HepG2 (cell line): ENCODE measurements at regions of chr7 and their contacts with region 1.

Region 1: DNA sequence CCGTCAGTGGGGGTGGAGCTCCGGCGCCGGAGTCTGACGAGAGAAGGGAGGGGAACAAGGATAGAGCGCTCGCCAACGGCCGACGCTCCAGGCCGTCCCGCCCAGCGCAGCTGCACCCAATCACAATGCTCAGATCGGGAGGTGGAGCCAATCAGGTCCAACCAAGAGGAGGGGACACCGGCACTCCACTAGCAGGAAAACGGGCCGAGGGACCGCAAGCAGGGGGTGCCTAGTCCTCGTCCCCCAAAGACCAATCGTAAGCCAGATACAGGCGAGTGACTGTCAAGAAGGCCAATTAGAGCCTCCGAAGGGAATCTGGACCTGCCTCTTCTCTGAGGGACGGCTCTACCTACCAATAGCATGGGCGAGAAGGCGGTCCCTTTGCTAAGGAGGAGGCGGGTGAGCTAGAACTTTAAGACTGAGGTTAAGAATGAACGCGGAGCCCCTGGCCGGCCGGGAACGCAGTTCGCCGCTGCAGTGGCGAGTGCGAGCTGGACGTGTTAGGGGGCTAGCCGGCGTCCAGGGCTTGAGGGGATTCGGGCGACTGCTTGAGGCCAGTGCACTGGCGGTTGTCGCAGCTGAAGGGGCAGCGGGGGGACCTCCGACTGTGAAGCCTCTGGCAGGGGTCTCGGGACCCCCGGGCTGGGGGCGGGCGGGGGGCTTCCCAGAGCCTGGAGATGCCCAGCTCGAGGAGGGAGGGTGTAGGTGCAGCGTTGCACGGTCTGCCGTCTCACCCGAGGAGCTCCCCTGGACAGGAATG is at the start of gene FBXO24:
- DNase-seq: peak; percentile 99
- ATAC-seq: peak; percentile 91
- H3K4me3 ChIP-seq: peak within 1 kb of the TSS; percentile 80 to 98 (median 86)
- H3K27ac ChIP-seq: peak within 1 kb of the TSS; percentile 81
- H3K4me1 ChIP-seq: peaks cover 56% of the 10 kb centered on the region
- H3K27me3 ChIP-seq: peaks cover 0 to 7% of the 10 kb centered on the region in 2 experiments; a peak in 3 of 5 replicates
- CTCF ChIP-seq: no peak
- EP300 ChIP-seq: no peak
- POLR2A ChIP-seq: peak in 1 of 2 experiments; percentile 80; a peak in 2 of 4 replicates
- RAD21 ChIP-seq: no peak
- total RNA-seq, gene FBXO24: 0.13 and 0.20 TPM in 2 replicates

Region 2: GRCh38 chr7:100022665-100023064 is 563.8 kb before region 1 on chr7:
- CTCF ChIA-PET with region 1: no interaction called
- POLR2A ChIA-PET with region 1: no interaction called
- in situ Hi-C with region 1: no loop called
- intact Hi-C with region 1: no loop called
- DNase-seq: peak; percentile 63
- ATAC-seq: peak; percentile 63
- H3K4me3 ChIP-seq: no peak overlapping the region
- H3K27ac ChIP-seq: peak overlapping the region; percentile 28
- H3K4me1 ChIP-seq: peaks cover 78% of the 10 kb centered on the region
- H3K27me3 ChIP-seq: no peaks in the 10 kb centered on the region
- CTCF ChIP-seq: no peak
- EP300 ChIP-seq: peak in 1 of 2 experiments; percentile 27; a peak in 1 of 4 replicates
- POLR2A ChIP-seq: no peak
- RAD21 ChIP-seq: no peak

Region 3: DNA sequence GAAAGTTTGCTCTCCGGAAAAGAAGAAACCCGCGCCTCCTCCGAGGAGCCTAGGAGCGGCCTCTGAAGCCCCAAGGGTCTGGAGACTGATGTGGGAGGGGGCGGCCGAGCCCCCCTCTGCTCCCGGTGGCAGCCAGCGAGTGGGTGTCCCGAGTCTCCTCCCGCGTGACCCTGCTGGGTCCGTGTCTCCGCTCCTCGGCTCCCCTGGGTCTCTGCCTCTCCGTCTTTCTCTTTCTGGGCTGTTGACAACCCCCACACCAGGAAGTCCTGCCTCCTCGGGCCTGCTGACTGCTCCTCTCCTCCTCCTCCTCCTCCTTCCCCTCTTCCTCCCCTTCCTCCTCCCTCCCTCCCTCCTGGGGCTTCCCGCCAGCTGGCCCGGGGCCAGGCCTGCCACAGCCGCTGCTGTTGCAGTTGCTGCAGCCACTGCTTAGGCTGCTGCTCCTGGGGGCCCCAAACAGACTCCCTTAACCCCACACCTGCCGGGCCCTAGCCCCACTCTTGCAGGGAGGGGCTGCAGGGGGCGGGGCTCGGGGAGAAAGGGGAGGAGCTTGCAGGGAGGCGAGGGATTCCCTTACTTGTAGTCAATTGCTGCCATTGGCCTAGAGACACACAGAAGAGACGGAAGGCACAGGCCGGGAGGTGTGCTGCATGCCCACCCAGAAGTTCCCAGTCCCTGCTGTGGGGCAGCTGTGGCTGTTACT is 107.3 kb before region 1 on chr7 and contains the start of gene TSC22D4:
- CTCF ChIA-PET with region 1: no interaction called
- POLR2A ChIA-PET with region 1: interaction called, 18 read pairs
- in situ Hi-C with region 1: no loop called
- intact Hi-C with region 1: no loop called
- DNase-seq: peak; percentile 73
- ATAC-seq: peak; percentile 60
- H3K4me3 ChIP-seq: peak within 1 kb of the TSS; percentile 72 to 96 (median 90)
- H3K27ac ChIP-seq: peak within 1 kb of the TSS; percentile 37
- H3K4me1 ChIP-seq: peaks cover 30% of the 10 kb centered on the region
- H3K27me3 ChIP-seq: peaks cover 0 to 13% of the 10 kb centered on the region in 2 experiments; a peak in 3 of 5 replicates
- CTCF ChIP-seq: no peak
- EP300 ChIP-seq: peak in 1 of 2 experiments; percentile 27; a peak in 1 of 4 replicates
- POLR2A ChIP-seq: peak; percentile 26 to 81; a peak in 3 of 4 replicates
- RAD21 ChIP-seq: no peak; the same call in 1 of the 2 replicates
- total RNA-seq, gene TSC22D4: 6.3 and 7.7 TPM in 2 replicates

Region 4: GRCh38 chr7:100532165-100533022 is 54.1 kb before region 1 on chr7:
- CTCF ChIA-PET with region 1: no interaction called
- POLR2A ChIA-PET with region 1: no interaction called
- in situ Hi-C with region 1: no loop called
- intact Hi-C with region 1: no loop called
- DNase-seq: no peak
- ATAC-seq: no peak
- H3K4me3 ChIP-seq: no peak overlapping the region
- H3K27ac ChIP-seq: no peak overlapping the region
- H3K4me1 ChIP-seq: peaks cover 60% of the 10 kb centered on the region
- H3K27me3 ChIP-seq: no peaks in the 10 kb centered on the region
- CTCF ChIP-seq: no peak
- EP300 ChIP-seq: no peak
- POLR2A ChIP-seq: no peak
- RAD21 ChIP-seq: no peak

Region 5: DNA sequence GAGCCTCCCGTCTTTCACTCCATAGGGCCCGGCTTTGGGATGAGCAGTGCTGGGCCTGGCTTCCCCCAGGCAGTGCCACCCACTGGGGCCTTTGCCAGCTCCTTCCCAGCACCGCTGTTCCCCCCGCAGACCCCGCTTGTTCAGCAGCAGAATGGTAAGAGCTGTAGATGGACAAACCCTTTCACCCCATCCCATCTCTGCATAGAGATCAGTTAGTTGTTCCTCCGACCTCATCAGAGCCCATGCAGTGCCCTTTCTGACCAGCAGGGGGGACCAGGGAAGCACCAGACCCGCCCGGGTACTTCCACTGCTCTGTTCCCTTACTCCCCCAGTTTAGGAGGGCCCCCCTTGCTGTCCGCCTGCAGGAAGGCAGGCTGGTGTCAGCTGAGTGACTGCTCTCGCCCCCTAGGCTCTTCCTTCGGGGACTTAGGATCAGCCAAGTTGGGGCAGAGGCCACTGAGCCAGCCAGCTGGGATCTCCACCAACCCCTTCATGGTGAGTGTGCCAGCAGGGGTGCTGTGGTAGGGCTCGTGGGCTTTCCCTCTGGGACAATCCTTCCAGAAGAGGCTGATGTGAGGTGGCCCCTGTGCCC is 22.5 kb before region 1 on chr7:
- CTCF ChIA-PET with region 1: no interaction called
- POLR2A ChIA-PET with region 1: interaction called, 33 read pairs
- in situ Hi-C with region 1: no loop called
- intact Hi-C with region 1: no loop called
- DNase-seq: no peak
- ATAC-seq: peak; percentile 5; the same call in 1 of the 3 replicates
- H3K4me3 ChIP-seq: no peak overlapping the region
- H3K27ac ChIP-seq: peak overlapping the region; percentile 45
- H3K4me1 ChIP-seq: peaks cover 93% of the 10 kb centered on the region
- H3K27me3 ChIP-seq: no peaks in the 10 kb centered on the region
- CTCF ChIP-seq: peak; percentile 82
- EP300 ChIP-seq: no peak
- POLR2A ChIP-seq: no peak
- RAD21 ChIP-seq: peak; percentile 66

Region 6: GRCh38 chr7:100611974-100612729 is 25.7 kb after region 1 on chr7 and contains the start of gene MOSPD3:
- CTCF ChIA-PET with region 1: no interaction called
- POLR2A ChIA-PET with region 1: interaction called, 61 read pairs
- in situ Hi-C with region 1: no loop called
- intact Hi-C with region 1: loop called (anchors 1 kb)
- DNase-seq: peak; percentile 99
- ATAC-seq: peak; percentile 94
- H3K4me3 ChIP-seq: peak within 1 kb of the TSS; percentile 61 to 81 (median 77)
- H3K27ac ChIP-seq: peak within 1 kb of the TSS; percentile 95
- H3K4me1 ChIP-seq: peaks cover 29% of the 10 kb centered on the region
- H3K27me3 ChIP-seq: no peaks in the 10 kb centered on the region
- CTCF ChIP-seq: no peak
- EP300 ChIP-seq: no peak
- POLR2A ChIP-seq: peak; percentile 60 to 78
- RAD21 ChIP-seq: no peak
- total RNA-seq, gene MOSPD3: 6.1 and 7.6 TPM in 2 replicates

Region 7: GRCh38 chr7:100691676-100692577 is 105.5 kb after region 1 on chr7:
- CTCF ChIA-PET with region 1: no interaction called
- POLR2A ChIA-PET with region 1: interaction called, 16 read pairs
- in situ Hi-C with region 1: no loop called
- intact Hi-C with region 1: no loop called
- DNase-seq: peak; percentile 72
- ATAC-seq: peak; percentile 88
- H3K4me3 ChIP-seq: peak overlapping the region; percentile 93 to 97 (median 96); a peak in 5 of 6 replicates
- H3K27ac ChIP-seq: peak overlapping the region; percentile 34
- H3K4me1 ChIP-seq: peaks cover 34% of the 10 kb centered on the region
- H3K27me3 ChIP-seq: no peaks in the 10 kb centered on the region
- CTCF ChIP-seq: peak; percentile 95
- EP300 ChIP-seq: no peak
- POLR2A ChIP-seq: no peak
- RAD21 ChIP-seq: peak; percentile 73